Transverse colon (tissue), 4 donors: ENCODE measurements at regions of chr4 and their contacts with region 1.

Region 1: DNA sequence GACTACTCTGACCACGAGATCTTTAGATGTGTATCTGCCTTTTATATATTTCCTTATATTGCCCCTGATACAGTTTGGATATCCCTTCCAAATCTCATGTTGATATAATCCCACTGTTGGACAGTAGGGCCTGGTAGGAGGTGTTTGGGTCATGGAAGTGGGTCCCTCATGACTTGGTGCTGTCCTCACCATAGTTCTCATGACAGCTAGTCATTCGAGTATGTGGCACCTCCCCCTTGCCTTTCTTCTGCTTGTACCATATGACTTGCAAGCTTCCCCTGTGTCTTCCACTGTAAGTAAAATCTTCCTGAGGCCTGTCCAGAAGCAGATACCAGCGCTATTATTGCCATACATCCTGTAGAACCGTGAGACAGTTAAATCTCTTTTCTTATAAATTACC is 145.3 kb downstream of the ZNF518B start:
- DNase-seq: no peak
- H3K4me3 ChIP-seq: no peak overlapping the region
- H3K27ac ChIP-seq: no peak overlapping the region
- H3K4me1 ChIP-seq: no peaks in the 10 kb centered on the region
- H3K27me3 ChIP-seq: no peaks in the 10 kb centered on the region
- CTCF ChIP-seq: no peak
- EP300 ChIP-seq: no peak
- POLR2A ChIP-seq: no peak

Region 2: GRCh38 chr4:10226756-10227155 is 85.2 kb before region 1 on chr4:
- in situ Hi-C with region 1: no loop called
- intact Hi-C with region 1: no loop called
- DNase-seq: no peak
- H3K4me3 ChIP-seq: no peak overlapping the region
- H3K27ac ChIP-seq: peak overlapping the region in 2 of 4 donors; percentile 55 to 59
- H3K4me1 ChIP-seq: peaks cover 0 to under 1% (median 0%) of the 10 kb centered on the region in 4 donors
- H3K27me3 ChIP-seq: no peaks in the 10 kb centered on the region
- CTCF ChIP-seq: no peak
- EP300 ChIP-seq: no peak
- POLR2A ChIP-seq: no peak

Region 3: DNA sequence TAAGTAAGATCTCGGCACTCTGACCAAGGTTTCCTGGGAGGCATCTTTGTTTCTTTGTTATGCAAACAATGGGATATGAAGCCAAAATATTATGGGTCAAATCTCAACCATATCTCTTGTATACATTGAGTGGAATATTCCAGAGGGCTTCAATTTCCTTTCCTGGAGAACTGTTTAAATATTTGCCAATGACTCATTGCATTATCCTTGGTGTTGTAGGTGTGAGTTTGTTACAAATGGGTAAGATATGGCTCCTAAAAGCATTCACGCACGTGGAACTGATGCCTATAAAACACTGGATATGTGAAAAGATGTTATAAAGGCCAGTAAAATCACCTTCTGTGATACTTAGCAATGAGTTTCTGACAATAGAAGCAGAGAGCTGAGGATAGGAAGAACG is 44.9 kb before region 1 on chr4:
- in situ Hi-C with region 1: no loop called
- intact Hi-C with region 1: loop called (anchors 2 kb)
- DNase-seq: no peak
- H3K4me3 ChIP-seq: no peak overlapping the region
- H3K27ac ChIP-seq: no peak overlapping the region
- H3K4me1 ChIP-seq: no peaks in the 10 kb centered on the region
- H3K27me3 ChIP-seq: no peaks in the 10 kb centered on the region
- CTCF ChIP-seq: no peak
- EP300 ChIP-seq: no peak
- POLR2A ChIP-seq: no peak

Region 4: DNA sequence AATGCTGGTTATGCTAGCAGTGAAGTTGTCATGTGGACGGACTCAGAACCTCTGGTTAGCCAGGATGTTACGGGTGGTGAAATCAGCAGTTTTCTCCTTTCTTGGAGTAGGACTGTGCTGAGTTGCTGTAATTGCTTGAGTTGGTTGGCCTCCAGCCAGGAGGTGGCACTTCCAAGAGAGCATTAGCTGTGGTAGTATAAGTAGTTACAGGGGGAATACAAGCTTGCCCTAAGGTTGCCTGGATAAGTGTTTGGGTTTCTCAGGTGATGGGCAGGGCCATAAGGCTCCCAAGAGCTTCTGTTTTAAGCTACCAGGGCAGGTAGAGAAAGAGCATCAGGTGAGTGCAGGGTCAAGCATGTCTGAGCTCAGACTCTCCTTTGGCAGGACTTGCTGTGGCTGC is 42.3 kb after region 1 on chr4:
- in situ Hi-C with region 1: no loop called
- intact Hi-C with region 1: loop called (anchors 1 kb)
- DNase-seq: no peak
- H3K4me3 ChIP-seq: no peak overlapping the region
- H3K27ac ChIP-seq: no peak overlapping the region
- H3K4me1 ChIP-seq: no peaks in the 10 kb centered on the region
- H3K27me3 ChIP-seq: no peaks in the 10 kb centered on the region
- CTCF ChIP-seq: no peak
- EP300 ChIP-seq: no peak
- POLR2A ChIP-seq: no peak